ENCODE measurements at regions of chrX and their contacts with region 1.

Region 1: DNA sequence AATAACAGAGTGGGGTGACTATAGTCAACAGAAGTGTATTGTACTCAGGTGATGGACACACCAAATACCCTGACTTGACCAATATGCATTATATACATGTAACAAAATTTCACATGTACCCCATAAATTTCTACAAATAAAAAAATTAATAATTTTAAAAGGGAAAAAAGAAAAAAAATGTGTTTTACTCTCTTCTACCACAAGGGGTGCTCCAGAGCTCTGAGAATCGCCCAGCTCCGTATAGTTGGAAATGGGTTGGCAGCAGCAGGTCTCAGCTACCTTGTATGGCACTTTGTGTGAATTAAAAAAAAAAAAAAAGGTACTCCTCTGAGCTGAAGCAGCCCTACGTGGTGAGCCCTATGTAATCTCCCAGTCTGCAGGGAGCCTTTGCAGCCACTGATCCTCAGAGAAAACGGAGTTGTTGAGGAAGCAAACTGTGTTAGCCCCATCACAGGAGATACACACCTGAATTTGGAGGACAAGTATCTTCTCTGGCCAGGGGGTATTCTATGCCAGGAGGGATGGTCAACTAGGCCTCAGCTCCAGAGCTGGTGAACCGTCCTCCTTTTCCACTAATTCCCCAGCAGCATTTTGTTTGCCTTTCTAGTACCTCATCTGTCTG is 17.2 kb upstream of the POLA1 start:
- DNase-seq: no peak
- H3K4me3 ChIP-seq: no peak overlapping the region
- H3K27ac ChIP-seq: no peak overlapping the region
- H3K27me3 ChIP-seq: peaks cover 0 to 57% (median 6%) of the 10 kb centered on the region in 45 donors
- CTCF ChIP-seq: peak in 55 of 56 donors; percentile 29 to 69 (median 53)

Region 2: DNA sequence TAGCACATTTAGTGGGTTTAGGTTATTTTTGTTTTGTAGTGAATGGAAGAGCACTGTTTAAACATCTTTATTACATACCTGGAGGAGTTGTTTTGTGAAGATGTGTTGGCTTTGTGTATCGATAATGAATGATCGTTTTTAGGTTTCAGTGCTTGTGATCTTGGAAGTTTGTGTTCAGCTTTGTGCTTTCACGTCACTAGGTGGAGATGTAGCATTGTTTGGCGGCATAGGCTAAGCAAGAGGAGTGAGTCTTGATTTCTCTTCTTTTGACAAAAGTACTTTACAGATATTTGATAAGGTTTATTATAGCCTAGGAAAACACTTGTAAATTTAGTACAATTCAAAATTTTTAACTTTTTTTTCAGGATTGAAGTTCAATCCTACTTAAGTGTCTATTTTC is 161.1 kb before region 1 on chrX:
- intact Hi-C with region 1: loop called (anchors 5 to 10 kb)
- DNase-seq: peak in 1 of 10 donors; percentile 24
- H3K4me3 ChIP-seq: no peak overlapping the region
- H3K27ac ChIP-seq: no peak overlapping the region
- H3K27me3 ChIP-seq: peaks cover 0 to 62% (median 5%) of the 10 kb centered on the region in 45 donors
- CTCF ChIP-seq: peak in 53 of 56 donors; percentile 19 to 74 (median 49)

Region 3: GRCh38 chrX:24561121-24561520 is 115.4 kb before region 1 on chrX:
- intact Hi-C with region 1: loop called in 1 of 2 experiments (anchors 10 kb)
- DNase-seq: no peak
- H3K4me3 ChIP-seq: no peak overlapping the region
- H3K27ac ChIP-seq: peak overlapping the region in 1 of 59 donors; percentile 11
- H3K27me3 ChIP-seq: peaks cover 0 to 51% (median 0%) of the 10 kb centered on the region in 45 donors
- CTCF ChIP-seq: peak in 12 of 56 donors; percentile 10 to 34 (median 16)

Region 4: GRCh38 chrX:25663701-25664100 is 987.2 kb after region 1 on chrX:
- intact Hi-C with region 1: no loop called
- DNase-seq: peak in 1 of 10 donors; percentile 9
- H3K4me3 ChIP-seq: no peak overlapping the region
- H3K27ac ChIP-seq: no peak overlapping the region
- H3K27me3 ChIP-seq: peaks cover 0 to 37% (median 4%) of the 10 kb centered on the region in 45 donors
- CTCF ChIP-seq: no peak

Measured in dorsolateral prefrontal cortex (tissue), 120 donors.